ENCODE measurements at regions of chr3 and their contacts with region 1.

Region 1: GRCh38 chr3:64484289-64484992 is 203.4 kb downstream of the ADAMTS9 start:
- DNase-seq: peak; percentile 73 to 94
- H3K4me3 ChIP-seq: no peak overlapping the region
- H3K27ac ChIP-seq: no peak overlapping the region
- H3K4me1 ChIP-seq: peaks cover 0 to 4% (median 3%) of the 10 kb centered on the region in 4 experiments; a peak in 6 of 7 replicates
- H3K27me3 ChIP-seq: no peaks in the 10 kb centered on the region
- CTCF ChIP-seq: peak; percentile 81 to 92 (median 91)
- EP300 ChIP-seq: no peak
- POLR2A ChIP-seq: no peak
- RAD21 ChIP-seq: peak; percentile 99

Region 2: GRCh38 chr3:64023187-64023848 is 461.1 kb before region 1 on chr3 and contains the start of gene PSMD6:
- CTCF ChIA-PET with region 1: interaction called, 51 read pairs
- POLR2A ChIA-PET with region 1: no interaction called
- DNase-seq: peak; percentile 57 to 99
- H3K4me3 ChIP-seq: peak within 1 kb of the TSS; percentile 93 to 97 (median 94)
- H3K27ac ChIP-seq: peak within 1 kb of the TSS; percentile 81
- H3K4me1 ChIP-seq: peaks cover 3 to 5% (median 4%) of the 10 kb centered on the region in 4 experiments; a peak in 6 of 7 replicates
- H3K27me3 ChIP-seq: no peaks in the 10 kb centered on the region
- CTCF ChIP-seq: peak; percentile 96 to 100 (median 100)
- EP300 ChIP-seq: peak in 1 of 2 experiments; percentile 48; a peak in 1 of 3 replicates
- POLR2A ChIP-seq: peak in 1 of 2 experiments; percentile 80; a peak in 2 of 3 replicates
- RAD21 ChIP-seq: peak; percentile 46 to 63
- total RNA-seq, gene PSMD6: 99.6 and 104 TPM in 2 replicates

Region 3: DNA sequence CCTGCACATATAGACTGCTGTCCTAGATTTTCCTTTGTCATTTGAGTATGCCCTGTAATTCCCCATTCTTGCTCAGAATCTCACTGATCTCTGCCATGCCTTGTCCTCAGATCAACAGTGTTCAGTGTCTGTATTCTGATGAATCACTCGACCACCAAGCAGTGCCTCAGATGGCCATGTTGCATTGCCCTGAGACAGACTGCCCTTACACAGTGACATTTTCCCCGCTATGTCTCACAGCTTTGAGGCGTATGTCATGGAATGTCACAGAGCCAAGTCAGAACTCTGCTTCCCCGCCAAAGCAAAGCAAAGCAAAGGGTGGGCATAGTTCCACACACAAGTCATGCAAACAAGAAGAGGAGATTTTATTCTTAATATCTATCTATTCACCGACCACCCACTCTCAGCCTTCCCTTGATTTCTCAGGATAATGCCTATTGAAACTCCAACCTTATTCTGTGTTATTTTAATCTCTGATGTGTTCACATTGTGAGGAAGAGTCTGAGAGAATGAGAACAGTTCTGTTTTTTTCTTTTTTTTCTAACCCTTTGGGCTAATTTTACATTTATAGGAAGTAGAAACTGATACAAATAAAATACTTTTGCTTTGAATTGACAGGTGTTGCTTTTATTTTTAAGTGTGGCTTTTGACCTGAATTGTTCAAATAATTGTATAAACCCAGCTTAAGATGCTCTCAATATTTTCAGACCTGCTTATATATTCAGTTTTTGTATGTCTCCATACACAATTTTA is 444.3 kb before region 1 on chr3:
- CTCF ChIA-PET with region 1: interaction called, 12 read pairs
- POLR2A ChIA-PET with region 1: no interaction called
- DNase-seq: no peak
- H3K4me3 ChIP-seq: no peak overlapping the region
- H3K27ac ChIP-seq: no peak overlapping the region
- H3K4me1 ChIP-seq: no peaks in the 10 kb centered on the region
- H3K27me3 ChIP-seq: no peaks in the 10 kb centered on the region
- CTCF ChIP-seq: no peak
- EP300 ChIP-seq: no peak
- POLR2A ChIP-seq: no peak
- RAD21 ChIP-seq: no peak

Region 4: DNA sequence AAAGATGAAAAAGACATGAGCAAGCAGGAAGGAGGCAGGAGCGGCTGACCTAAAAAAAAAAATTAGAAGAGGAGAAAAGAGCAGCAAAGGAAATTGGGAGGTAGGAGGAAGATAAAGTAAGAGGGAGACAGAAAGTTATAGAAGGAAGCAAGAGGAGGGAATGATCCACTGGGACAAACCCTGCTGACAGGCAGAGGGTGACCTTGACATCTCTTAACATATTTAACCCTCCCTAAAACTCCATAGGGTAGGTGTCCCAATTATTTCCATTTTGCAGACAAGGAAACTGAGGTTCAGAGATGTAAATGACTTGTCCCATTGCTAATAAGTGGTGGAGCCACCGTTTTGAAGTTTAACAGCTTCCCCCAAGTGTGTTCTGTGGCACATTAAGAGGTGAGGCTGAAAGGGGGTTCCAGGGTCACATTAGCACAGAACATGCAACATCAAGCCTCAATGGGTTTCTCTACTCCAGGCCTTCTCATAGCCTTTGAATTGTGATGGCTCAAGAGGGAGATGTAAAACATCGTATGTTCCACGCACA is 221.8 kb before region 1 on chr3:
- CTCF ChIA-PET with region 1: interaction called, 13 read pairs
- POLR2A ChIA-PET with region 1: no interaction called
- DNase-seq: no peak
- H3K4me3 ChIP-seq: no peak overlapping the region
- H3K27ac ChIP-seq: no peak overlapping the region
- H3K4me1 ChIP-seq: peaks cover 0 to 9% (median 5%) of the 10 kb centered on the region in 4 experiments; a peak in 4 of 7 replicates
- H3K27me3 ChIP-seq: no peaks in the 10 kb centered on the region
- CTCF ChIP-seq: peak; percentile 21 to 45 (median 29); a peak in 3 of 4 replicates
- EP300 ChIP-seq: no peak
- POLR2A ChIP-seq: no peak
- RAD21 ChIP-seq: peak; percentile 53 to 57

Region 5: DNA sequence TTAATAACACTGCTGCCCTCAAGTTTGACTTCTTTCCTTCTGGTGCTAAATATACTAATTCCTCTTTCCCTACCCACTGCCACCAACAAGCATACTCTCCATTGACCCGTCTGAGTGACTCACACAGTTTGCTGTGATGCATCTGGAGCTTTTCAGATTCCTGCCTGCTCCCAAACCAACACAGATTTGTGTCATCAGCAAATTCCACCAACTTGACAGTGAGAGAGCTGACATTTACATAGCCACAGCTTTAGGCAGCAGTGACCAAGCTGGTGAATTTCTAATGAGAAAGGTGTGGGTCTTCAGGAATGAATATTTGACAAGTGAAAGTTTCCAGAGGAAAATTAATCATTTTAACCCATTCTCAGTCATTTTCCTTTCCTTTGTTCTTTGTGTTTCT is 162.7 kb before region 1 on chr3:
- CTCF ChIA-PET with region 1: interaction called, 24 read pairs
- POLR2A ChIA-PET with region 1: no interaction called
- DNase-seq: no peak
- H3K4me3 ChIP-seq: no peak overlapping the region
- H3K27ac ChIP-seq: no peak overlapping the region
- H3K4me1 ChIP-seq: peaks cover 0 to 3% (median 0%) of the 10 kb centered on the region in 4 experiments; a peak in 2 of 7 replicates
- H3K27me3 ChIP-seq: no peaks in the 10 kb centered on the region
- CTCF ChIP-seq: no peak
- EP300 ChIP-seq: no peak
- POLR2A ChIP-seq: no peak
- RAD21 ChIP-seq: no peak

Region 6: GRCh38 chr3:64411101-64411500 is 73.3 kb before region 1 on chr3:
- CTCF ChIA-PET with region 1: interaction called, 11 read pairs
- POLR2A ChIA-PET with region 1: no interaction called
- DNase-seq: no peak
- H3K4me3 ChIP-seq: no peak overlapping the region
- H3K27ac ChIP-seq: no peak overlapping the region
- H3K4me1 ChIP-seq: no peaks in the 10 kb centered on the region
- H3K27me3 ChIP-seq: no peaks in the 10 kb centered on the region
- CTCF ChIP-seq: no peak
- EP300 ChIP-seq: no peak
- POLR2A ChIP-seq: no peak
- RAD21 ChIP-seq: no peak

Region 7: GRCh38 chr3:64462203-64462602 is 22.2 kb before region 1 on chr3:
- CTCF ChIA-PET with region 1: interaction called, 60 read pairs
- POLR2A ChIA-PET with region 1: interaction called, 3 read pairs
- DNase-seq: no peak
- H3K4me3 ChIP-seq: no peak overlapping the region
- H3K27ac ChIP-seq: no peak overlapping the region
- H3K4me1 ChIP-seq: peaks cover 1 to 8% (median 2%) of the 10 kb centered on the region in 4 experiments; a peak in 3 of 7 replicates
- H3K27me3 ChIP-seq: no peaks in the 10 kb centered on the region
- CTCF ChIP-seq: no peak
- EP300 ChIP-seq: no peak
- POLR2A ChIP-seq: no peak
- RAD21 ChIP-seq: no peak

Region 8: GRCh38 chr3:64642327-64643151 is 158.1 kb after region 1 on chr3:
- CTCF ChIA-PET with region 1: no interaction called
- POLR2A ChIA-PET with region 1: no interaction called
- DNase-seq: no peak
- H3K4me3 ChIP-seq: no peak overlapping the region
- H3K27ac ChIP-seq: no peak overlapping the region
- H3K4me1 ChIP-seq: peaks cover 0 to 6% (median 4%) of the 10 kb centered on the region in 4 experiments; a peak in 4 of 7 replicates
- H3K27me3 ChIP-seq: peaks cover 0 to 2% (median 0%) of the 10 kb centered on the region in 4 experiments; a peak in 1 of 7 replicates
- CTCF ChIP-seq: no peak
- EP300 ChIP-seq: no peak
- POLR2A ChIP-seq: no peak
- RAD21 ChIP-seq: no peak

Measured in H1 (cell line).